Upper lobe of right lung (tissue), 1 donor: ENCODE measurements at regions of chr5 and their contacts with region 1.

Region 1: DNA sequence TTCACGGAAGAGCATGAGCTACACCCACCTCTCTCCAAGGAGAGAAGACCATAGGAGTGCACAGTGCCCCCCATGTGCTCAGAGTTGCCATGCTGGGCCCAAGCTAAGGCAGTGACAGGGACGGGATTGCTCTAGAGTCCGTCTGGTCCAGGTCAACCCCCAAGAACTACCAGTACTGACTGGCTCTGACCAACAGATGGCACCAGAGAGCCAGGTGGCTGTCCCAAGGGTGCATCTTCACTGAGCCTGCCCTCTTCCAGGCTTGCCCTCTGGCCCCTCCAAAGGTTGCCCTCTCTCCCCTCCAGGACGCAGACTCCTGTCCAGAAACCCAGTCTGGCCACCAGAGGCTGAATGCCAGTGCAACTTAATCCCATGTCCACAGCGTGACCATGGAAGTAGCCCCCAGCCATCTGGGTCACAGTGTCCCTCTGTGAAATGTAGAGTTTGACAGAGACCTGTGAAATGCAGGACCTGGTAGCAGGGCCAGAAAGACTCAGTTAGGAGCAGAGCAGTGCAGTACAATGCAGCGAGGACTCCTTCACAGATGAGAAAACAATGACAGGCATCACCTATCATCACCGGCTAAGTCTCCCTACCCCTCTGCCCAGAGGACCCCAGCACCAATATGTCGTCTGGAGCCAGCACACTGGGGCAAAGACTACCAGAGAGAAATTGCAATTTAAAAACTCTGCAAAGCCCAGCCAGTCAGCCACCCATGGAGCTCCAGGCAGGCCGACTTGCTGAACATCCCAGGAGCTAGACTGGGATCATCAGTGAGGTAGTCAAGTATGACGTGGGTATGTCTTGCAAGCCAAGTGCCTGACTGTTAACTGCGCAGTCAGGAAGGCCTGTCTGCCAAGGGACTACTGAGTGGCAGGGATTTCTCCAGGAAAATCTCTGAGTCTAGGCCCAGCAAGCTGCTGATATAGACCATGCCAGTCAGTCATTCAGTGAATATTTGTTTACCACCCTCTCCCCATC is 7.7 kb upstream of the SKP1 start:
- DNase-seq: peak; percentile 75
- ATAC-seq: peak; percentile 96
- H3K4me3 ChIP-seq: no peak overlapping the region
- H3K27ac ChIP-seq: no peak overlapping the region
- H3K4me1 ChIP-seq: no peaks in the 10 kb centered on the region
- H3K27me3 ChIP-seq: no peaks in the 10 kb centered on the region
- CTCF ChIP-seq: peak; percentile 91

Region 2: GRCh38 chr5:134289509-134290113 is 105.2 kb after region 1 on chr5:
- intact Hi-C with region 1: loop called (anchors 5 kb)
- DNase-seq: no peak
- ATAC-seq: peak; percentile 99
- H3K4me3 ChIP-seq: no peak overlapping the region
- H3K27ac ChIP-seq: no peak overlapping the region
- H3K4me1 ChIP-seq: no peaks in the 10 kb centered on the region
- H3K27me3 ChIP-seq: no peaks in the 10 kb centered on the region
- CTCF ChIP-seq: peak; percentile 79

Region 3: GRCh38 chr5:134586866-134587524 is 402.6 kb after region 1 on chr5:
- intact Hi-C with region 1: loop called (anchors 10 kb)
- DNase-seq: peak; percentile 92
- ATAC-seq: peak; percentile 95
- H3K4me3 ChIP-seq: no peak overlapping the region
- H3K27ac ChIP-seq: no peak overlapping the region
- H3K4me1 ChIP-seq: peaks cover 8% of the 10 kb centered on the region
- H3K27me3 ChIP-seq: no peaks in the 10 kb centered on the region
- CTCF ChIP-seq: peak; percentile 83